Activated CD4-positive, alpha-beta memory T cell treated with anti-CD3 and anti-CD28 coated beads, Interleukin-2, amount 10 ng/mL, durations not matched to agents 7 days and 5 days (primary cell): ENCODE measurements at regions of chr21 and their contacts with region 1.

Region 1: DNA sequence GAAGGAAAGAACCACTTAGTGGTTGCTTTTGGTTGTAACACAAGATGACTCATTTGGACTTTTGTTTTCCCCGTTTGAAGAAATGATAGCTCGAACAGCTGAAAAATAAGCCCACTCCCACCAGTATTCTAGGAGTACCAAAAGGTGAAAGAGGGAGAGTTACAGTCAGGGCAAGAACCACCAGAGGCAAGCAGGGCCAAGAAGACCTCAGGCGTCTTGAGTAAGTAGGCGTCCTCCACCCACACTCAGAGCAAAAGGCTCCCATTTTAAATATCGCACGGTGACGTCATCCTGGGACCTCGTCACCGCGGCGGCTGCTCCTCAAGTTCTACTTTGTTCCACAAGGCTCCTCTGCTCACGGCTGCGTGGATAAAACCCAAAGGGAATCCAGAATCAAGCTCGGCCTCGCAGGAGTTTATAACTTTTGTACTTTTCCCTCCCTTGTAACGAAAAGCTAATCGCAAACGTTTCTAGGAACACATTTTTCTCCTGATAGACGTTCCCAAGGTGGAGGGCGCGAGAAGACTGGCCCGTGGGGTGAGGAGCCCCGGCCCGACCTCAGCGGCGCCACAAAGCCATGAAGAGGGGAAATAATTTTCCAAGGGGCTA is 1.2 kb downstream of the BTG3 start:
- DNase-seq: peak; percentile 85
- H3K4me3 Mint-ChIP-seq: peak overlapping the region; percentile 98
- H3K27ac Mint-ChIP-seq: peak overlapping the region; percentile 98
- H3K4me1 Mint-ChIP-seq: peaks cover 64% of the 10 kb centered on the region
- H3K27me3 Mint-ChIP-seq: no peaks in the 10 kb centered on the region

Region 2: GRCh38 chr21:17598437-17598836 is 13.1 kb before region 1 on chr21:
- CTCF ChIA-PET with region 1: interaction called, 6 read pairs
- POLR2A ChIA-PET with region 1: interaction called, 34 read pairs
- DNase-seq: no peak
- H3K4me3 Mint-ChIP-seq: no peak overlapping the region
- H3K27ac Mint-ChIP-seq: peak overlapping the region; percentile 31
- H3K4me1 Mint-ChIP-seq: peaks cover 29% of the 10 kb centered on the region
- H3K27me3 Mint-ChIP-seq: no peaks in the 10 kb centered on the region

Region 3: DNA sequence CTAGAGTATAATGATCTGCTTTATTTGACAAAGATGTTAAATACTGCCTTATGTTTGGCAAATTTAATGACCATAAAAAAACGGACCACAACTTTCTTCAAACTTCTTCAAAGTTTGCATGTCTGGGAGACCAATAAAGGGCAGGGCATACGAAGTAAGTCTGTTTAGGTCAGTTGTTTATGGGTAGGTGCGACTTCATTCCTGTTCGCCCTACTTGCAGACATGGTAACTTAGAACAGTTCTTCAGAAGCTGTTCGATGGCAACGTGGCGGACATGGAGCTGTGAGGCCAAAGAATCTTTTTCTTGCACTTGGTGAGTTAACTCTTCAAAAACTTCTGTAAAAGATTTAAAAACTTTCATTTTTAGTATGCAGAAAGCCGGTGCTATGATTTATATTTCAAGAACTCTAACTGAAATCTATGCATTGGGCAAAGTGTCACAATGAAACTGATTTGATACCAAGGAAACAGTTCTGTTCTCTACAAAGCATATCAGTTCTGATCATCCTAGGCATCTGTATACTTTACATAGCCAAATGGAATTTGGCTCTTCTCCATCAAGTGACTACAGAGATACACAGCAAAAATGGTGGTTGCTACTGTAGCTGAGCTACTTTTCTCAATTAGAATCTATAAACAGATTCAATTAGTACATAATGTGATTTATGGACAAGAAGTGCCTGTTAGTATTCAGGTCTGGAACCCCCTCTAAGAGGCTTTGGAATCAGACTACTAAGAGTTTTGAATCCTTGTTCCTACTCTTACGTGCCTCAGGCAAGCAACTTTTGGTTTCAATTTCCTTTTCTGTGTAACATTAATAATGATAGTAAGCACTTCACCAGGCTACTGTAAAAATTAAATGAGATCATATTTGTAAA is 182.0 kb after region 1 on chr21:
- CTCF ChIA-PET with region 1: no interaction called
- POLR2A ChIA-PET with region 1: interaction called, 11 read pairs
- DNase-seq: no peak
- H3K4me3 Mint-ChIP-seq: peak overlapping the region; percentile 75
- H3K27ac Mint-ChIP-seq: peak overlapping the region; percentile 90
- H3K4me1 Mint-ChIP-seq: peaks cover 72% of the 10 kb centered on the region
- H3K27me3 Mint-ChIP-seq: no peaks in the 10 kb centered on the region

Region 4: GRCh38 chr21:17819114-17819876 is 207.8 kb after region 1 on chr21 and contains the start of gene C21orf91:
- CTCF ChIA-PET with region 1: no interaction called
- POLR2A ChIA-PET with region 1: interaction called, 27 read pairs
- DNase-seq: peak; percentile 92
- H3K4me3 Mint-ChIP-seq: peak within 1 kb of the TSS; percentile 88
- H3K27ac Mint-ChIP-seq: peak within 1 kb of the TSS; percentile 99
- H3K4me1 Mint-ChIP-seq: peaks cover 44% of the 10 kb centered on the region
- H3K27me3 Mint-ChIP-seq: no peaks in the 10 kb centered on the region
- total RNA-seq, gene C21orf91: 55.9 to 57.1 TPM